Naive thymus-derived CD4-positive, alpha-beta T cell (primary cell): ENCODE measurements at regions of chr1 and their contacts with region 1.

Region 1: DNA sequence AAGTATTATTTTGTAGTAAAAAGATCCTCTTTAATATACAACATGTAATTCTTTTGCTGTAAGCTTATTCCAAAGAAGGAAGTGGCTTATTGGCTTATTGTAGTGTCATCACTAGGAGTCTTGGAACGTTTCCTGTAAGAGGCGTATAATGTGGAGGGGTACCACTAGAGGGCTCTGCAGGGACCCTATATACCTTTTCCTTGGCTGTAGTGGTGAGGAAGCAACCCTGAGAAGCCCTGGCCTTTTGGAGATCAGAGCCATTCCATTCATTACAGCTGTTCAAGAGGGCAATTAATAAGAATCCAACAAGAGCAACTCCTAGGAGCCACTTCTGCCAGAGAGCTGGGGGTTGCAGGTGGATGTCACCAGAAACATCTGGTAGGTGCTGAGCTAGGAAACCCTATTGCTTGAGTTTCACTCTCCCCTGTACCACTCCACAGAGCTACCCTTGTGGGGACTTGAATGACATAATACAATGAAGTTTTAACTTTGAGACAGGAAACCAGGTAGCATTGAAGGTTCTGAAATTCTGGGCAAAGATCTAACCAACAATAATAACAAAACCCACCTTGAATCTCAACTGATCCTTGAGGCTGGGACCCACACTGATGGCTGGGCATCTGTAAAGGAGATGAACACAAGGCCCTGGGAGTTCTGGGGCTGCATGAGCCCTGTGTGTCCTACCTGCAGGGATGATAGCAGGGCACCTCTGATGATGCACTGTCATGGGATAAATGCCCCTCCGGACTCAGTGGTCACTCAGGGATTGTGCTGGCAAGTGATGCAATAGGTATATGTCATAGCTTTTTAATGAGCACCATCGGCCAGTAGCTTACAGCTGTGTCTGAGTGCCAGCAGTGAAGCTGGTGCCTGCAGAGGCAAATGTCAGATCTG is 160.2 kb upstream of the COA6 start:
- DNase-seq: peak in 4 of 9 donors; percentile 28 to 49 (median 36)
- ATAC-seq: peak; percentile 36
- H3K4me3 ChIP-seq: no peak overlapping the region
- H3K4me3 Mint-ChIP-seq: peak overlapping the region; percentile 21 to 85 (median 80)
- H3K27ac ChIP-seq: no peak overlapping the region
- H3K27ac Mint-ChIP-seq: peak overlapping the region in 4 of 9 donors; percentile 14 to 43 (median 32)
- H3K4me1 ChIP-seq: peaks cover 0 to 17% of the 10 kb centered on the region in 2 donors
- H3K4me1 Mint-ChIP-seq: peaks cover 0 to 39% (median 22%) of the 10 kb centered on the region in 7 donors
- H3K27me3 ChIP-seq: no peaks in the 10 kb centered on the region
- H3K27me3 Mint-ChIP-seq: peaks cover 8 to 59% (median 25%) of the 10 kb centered on the region in 5 donors

Region 2: DNA sequence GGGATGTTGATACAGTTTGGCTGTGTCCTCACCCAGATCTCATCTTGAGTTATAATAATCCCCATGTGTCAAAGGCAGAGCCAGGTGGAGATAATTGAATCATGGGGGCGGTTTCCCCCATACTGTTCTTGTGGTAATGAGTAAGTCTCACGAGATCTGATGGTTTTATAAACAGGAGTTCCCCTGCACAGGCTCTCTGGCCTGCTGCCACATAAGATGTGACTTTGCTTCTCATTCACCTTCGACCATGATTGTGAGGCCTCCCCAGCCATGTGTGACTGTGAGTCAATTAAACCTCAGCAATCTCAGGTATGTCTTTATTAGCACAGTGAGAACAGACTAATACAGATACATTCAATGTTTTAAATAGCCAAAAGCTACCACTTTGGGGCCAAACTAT is 267.4 kb before region 1 on chr1:
- CTCF ChIA-PET with region 1: no interaction called
- POLR2A ChIA-PET with region 1: no interaction called
- intact Hi-C with region 1: no loop called
- DNase-seq: no peak
- ATAC-seq: no peak
- H3K4me3 ChIP-seq: no peak overlapping the region
- H3K4me3 Mint-ChIP-seq: no peak overlapping the region
- H3K27ac ChIP-seq: no peak overlapping the region
- H3K27ac Mint-ChIP-seq: no peak overlapping the region
- H3K4me1 ChIP-seq: no peaks in the 10 kb centered on the region
- H3K4me1 Mint-ChIP-seq: no peaks in the 10 kb centered on the region
- H3K27me3 ChIP-seq: no peaks in the 10 kb centered on the region
- H3K27me3 Mint-ChIP-seq: peaks cover 0 to 22% (median 14%) of the 10 kb centered on the region in 5 donors

Region 3: GRCh38 chr1:234154320-234155251 is 58.4 kb before region 1 on chr1:
- CTCF ChIA-PET with region 1: no interaction called
- POLR2A ChIA-PET with region 1: no interaction called
- intact Hi-C with region 1: loop called in 1 of 2 experiments (anchors 10 kb)
- DNase-seq: peak in 6 of 9 donors; percentile 7 to 54 (median 46)
- ATAC-seq: peak; percentile 31
- H3K4me3 ChIP-seq: no peak overlapping the region
- H3K4me3 Mint-ChIP-seq: no peak overlapping the region
- H3K27ac ChIP-seq: no peak overlapping the region
- H3K27ac Mint-ChIP-seq: no peak overlapping the region
- H3K4me1 ChIP-seq: no peaks in the 10 kb centered on the region
- H3K4me1 Mint-ChIP-seq: no peaks in the 10 kb centered on the region
- H3K27me3 ChIP-seq: no peaks in the 10 kb centered on the region
- H3K27me3 Mint-ChIP-seq: peaks cover 4 to 25% (median 14%) of the 10 kb centered on the region in 5 donors

Region 4: DNA sequence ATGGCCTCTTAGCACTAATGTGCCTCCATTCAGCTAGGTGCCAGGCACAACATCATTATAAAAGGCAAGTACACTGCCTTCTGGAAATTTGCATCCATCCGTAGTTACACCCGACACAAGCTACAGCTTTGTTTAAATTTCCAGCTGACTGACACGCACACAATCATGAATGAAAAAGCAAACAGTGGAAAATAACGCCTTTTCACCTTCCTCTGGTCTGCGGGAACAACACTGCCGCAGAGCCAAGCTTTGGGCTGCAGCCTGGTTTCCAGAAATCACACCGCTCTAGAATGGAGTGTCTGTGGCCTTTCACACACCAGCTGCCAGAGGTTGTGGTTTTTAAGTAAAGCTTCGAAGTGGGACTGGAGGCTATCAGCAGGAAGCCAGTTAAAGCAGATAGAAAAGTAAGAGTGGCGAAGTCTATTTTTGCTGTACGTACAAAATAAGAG is 17.4 kb after region 1 on chr1:
- CTCF ChIA-PET with region 1: no interaction called
- POLR2A ChIA-PET with region 1: no interaction called
- intact Hi-C with region 1: loop called in 1 of 2 experiments (anchors 1 kb)
- DNase-seq: peak in 1 of 9 donors; percentile 13
- ATAC-seq: no peak
- H3K4me3 ChIP-seq: no peak overlapping the region
- H3K4me3 Mint-ChIP-seq: peak overlapping the region; percentile 12 to 77 (median 62)
- H3K27ac ChIP-seq: no peak overlapping the region
- H3K27ac Mint-ChIP-seq: peak overlapping the region in 4 of 9 donors; percentile 53 to 72 (median 56)
- H3K4me1 ChIP-seq: no peaks in the 10 kb centered on the region
- H3K4me1 Mint-ChIP-seq: peaks cover 7 to 23% (median 10%) of the 10 kb centered on the region in 7 donors
- H3K27me3 ChIP-seq: no peaks in the 10 kb centered on the region
- H3K27me3 Mint-ChIP-seq: peaks cover 0 to 31% (median 17%) of the 10 kb centered on the region in 5 donors

Region 5: GRCh38 chr1:234326497-234327366 is 113.7 kb after region 1 on chr1:
- CTCF ChIA-PET with region 1: no interaction called
- POLR2A ChIA-PET with region 1: no interaction called
- intact Hi-C with region 1: loop called in 1 of 2 experiments (anchors 2 kb)
- DNase-seq: peak; percentile 32 to 79 (median 67)
- ATAC-seq: peak; percentile 92
- H3K4me3 ChIP-seq: peak overlapping the region; percentile 64
- H3K4me3 Mint-ChIP-seq: peak overlapping the region; percentile 76 to 94 (median 90)
- H3K27ac ChIP-seq: peak overlapping the region; percentile 67
- H3K27ac Mint-ChIP-seq: peak overlapping the region; percentile 41 to 99 (median 85)
- H3K4me1 ChIP-seq: peaks cover 0 to 4% of the 10 kb centered on the region in 2 donors
- H3K4me1 Mint-ChIP-seq: peaks cover 23 to 36% (median 30%) of the 10 kb centered on the region in 7 donors
- H3K27me3 ChIP-seq: no peaks in the 10 kb centered on the region
- H3K27me3 Mint-ChIP-seq: peaks cover 4 to 23% (median 12%) of the 10 kb centered on the region in 5 donors

Region 6: DNA sequence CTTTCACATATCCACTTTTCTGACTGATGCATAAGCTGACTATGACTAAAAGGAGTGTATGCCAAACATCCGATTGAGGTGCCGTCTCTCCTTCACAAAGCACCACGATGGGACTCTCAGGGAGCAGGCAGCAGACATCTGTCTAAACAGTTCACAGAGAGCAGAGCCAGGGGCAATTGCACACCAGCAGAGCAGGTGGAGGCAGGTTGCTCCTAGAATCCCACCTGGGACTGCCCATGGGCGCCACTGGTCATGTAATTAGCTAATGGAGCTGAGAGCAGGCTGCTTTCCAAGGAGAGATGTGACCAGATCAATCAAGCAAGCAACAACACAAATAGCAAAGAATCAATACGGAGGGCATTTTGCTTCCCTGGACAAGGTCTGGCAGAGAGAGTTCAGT is 129.8 kb after region 1 on chr1:
- CTCF ChIA-PET with region 1: no interaction called
- POLR2A ChIA-PET with region 1: no interaction called
- intact Hi-C with region 1: no loop called
- DNase-seq: no peak
- ATAC-seq: no peak
- H3K4me3 ChIP-seq: no peak overlapping the region
- H3K4me3 Mint-ChIP-seq: no peak overlapping the region
- H3K27ac ChIP-seq: no peak overlapping the region
- H3K27ac Mint-ChIP-seq: no peak overlapping the region
- H3K4me1 ChIP-seq: no peaks in the 10 kb centered on the region
- H3K4me1 Mint-ChIP-seq: no peaks in the 10 kb centered on the region
- H3K27me3 ChIP-seq: no peaks in the 10 kb centered on the region
- H3K27me3 Mint-ChIP-seq: peaks cover 0 to 32% (median 0%) of the 10 kb centered on the region in 5 donors